Activated CD4-positive, alpha-beta memory T cell treated with anti-CD3 and anti-CD28 coated beads for 36 hours (primary cell): ENCODE measurements at regions of chrX and their contacts with region 1.

Region 1: DNA sequence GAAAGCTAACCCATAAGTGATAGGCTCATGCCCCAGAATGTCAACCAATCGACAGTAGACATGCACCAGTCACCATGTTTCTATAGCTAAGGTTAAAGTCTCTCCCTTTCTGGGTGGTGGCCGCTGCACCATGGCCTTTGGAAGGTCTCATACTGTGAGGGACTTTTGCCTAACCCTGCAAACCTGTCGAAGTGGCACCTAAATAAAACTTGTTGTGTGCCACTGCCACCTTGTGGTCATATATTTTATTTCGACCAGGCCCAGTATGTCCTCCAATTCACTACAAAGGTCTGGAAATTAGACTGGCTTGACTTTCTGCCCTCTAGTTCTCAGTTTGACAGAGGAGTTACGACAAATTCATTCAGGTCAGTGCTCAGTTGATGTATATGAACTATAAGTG is 163.1 kb downstream of the SMARCA1 start:
- DNase-seq: peak; percentile 35
- H3K4me3 Mint-ChIP-seq: no peak overlapping the region
- H3K27ac Mint-ChIP-seq: no peak overlapping the region
- H3K4me1 Mint-ChIP-seq: no peaks in the 10 kb centered on the region
- H3K27me3 Mint-ChIP-seq: no peaks in the 10 kb centered on the region

Region 2: DNA sequence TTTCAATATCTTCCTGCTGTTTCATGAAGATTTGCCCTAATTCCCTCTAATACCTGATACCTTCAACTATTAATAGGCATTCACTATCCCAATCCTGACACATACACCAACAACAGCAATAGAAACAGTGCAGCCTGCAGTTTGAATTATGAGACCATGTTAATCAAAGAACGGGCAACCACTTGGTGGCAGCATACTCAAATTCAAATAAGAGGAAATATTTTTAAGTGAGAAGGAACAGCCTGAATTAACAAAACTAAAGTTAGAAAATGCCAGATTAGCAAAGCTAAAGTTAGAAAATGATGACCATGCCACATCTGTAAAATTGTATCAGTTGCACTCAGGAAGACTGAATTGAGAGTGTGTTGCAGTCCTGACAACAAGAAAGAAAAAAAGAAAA is 41.8 kb before region 1 on chrX:
- CTCF ChIA-PET with region 1: no interaction called
- POLR2A ChIA-PET with region 1: no interaction called
- intact Hi-C with region 1: loop called (anchors 1 kb)
- DNase-seq: no peak
- H3K4me3 Mint-ChIP-seq: no peak overlapping the region
- H3K27ac Mint-ChIP-seq: no peak overlapping the region
- H3K4me1 Mint-ChIP-seq: no peaks in the 10 kb centered on the region
- H3K27me3 Mint-ChIP-seq: peaks cover 2% of the 10 kb centered on the region

Region 3: GRCh38 chrX:129632443-129632842 is 272.3 kb after region 1 on chrX:
- CTCF ChIA-PET with region 1: no interaction called
- POLR2A ChIA-PET with region 1: no interaction called
- intact Hi-C with region 1: no loop called
- DNase-seq: no peak
- H3K4me3 Mint-ChIP-seq: no peak overlapping the region
- H3K27ac Mint-ChIP-seq: no peak overlapping the region
- H3K4me1 Mint-ChIP-seq: no peaks in the 10 kb centered on the region
- H3K27me3 Mint-ChIP-seq: no peaks in the 10 kb centered on the region